AG04449 (cell line): ENCODE measurements at regions of chr2 and their contacts with region 1.

Region 1: DNA sequence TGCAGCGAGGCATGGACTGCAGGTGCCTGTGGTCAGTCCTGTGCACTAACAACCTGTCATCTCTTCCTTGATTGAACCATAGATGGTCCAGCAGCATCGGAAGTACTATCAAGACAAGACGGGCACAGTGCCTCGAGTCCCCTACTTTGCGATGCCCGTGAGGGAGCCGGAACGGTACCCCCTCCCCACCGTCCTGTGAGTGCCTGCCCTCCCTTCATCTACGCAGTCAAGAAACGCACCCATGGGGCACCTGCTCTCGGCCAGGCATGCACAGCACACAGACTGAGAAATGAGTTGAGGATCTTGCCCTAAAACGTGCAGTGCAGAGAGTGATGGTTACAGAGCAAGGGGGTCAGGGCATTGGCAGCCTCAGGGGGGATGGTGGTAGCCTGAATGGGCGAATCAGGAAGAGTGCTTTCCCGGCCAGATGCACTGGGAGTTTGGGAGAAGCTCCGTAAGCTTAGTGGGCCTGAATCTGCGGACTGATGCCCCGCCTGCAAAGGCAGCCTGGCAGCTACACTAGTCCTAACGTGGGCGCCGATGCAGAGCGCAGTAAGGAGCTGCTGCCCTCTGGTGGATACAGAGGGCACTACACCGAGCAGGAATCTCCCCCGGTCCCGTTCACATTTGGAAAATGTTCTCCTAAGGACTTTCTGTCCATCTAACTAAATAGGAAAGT is 63.6 kb downstream of the CIB4 start:
- DNase-seq: no peak
- H3K4me3 ChIP-seq: no peak overlapping the region
- CTCF ChIP-seq: peak; percentile 94

Region 2: DNA sequence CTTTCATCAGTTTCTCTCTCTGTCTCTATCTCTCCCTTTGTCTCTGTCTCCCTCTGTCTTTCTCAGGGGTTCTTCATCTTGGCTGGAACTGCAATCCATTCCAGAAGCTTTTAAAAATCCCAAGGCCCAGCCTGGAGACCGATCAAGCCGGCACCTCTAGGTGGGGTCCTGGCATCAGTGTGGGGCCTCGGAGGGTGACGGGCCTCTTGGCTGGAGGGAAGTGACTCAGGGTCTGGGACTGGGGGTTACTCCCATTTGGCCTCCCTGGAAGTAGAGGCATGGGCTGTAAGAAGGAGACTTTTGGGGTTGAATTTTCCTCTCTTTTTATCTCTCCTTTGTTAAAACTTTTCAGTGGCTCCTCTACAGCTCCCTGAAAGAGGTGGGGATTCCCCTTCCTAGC is 46.9 kb before region 1 on chr2:
- CTCF ChIA-PET with region 1: interaction called, 13 read pairs
- POLR2A ChIA-PET with region 1: no interaction called
- DNase-seq: peak; percentile 4
- H3K4me3 ChIP-seq: no peak overlapping the region
- CTCF ChIP-seq: no peak

Region 3: GRCh38 chr2:26555246-26556133 is 22.1 kb before region 1 on chr2:
- CTCF ChIA-PET with region 1: interaction called, 15 read pairs
- POLR2A ChIA-PET with region 1: no interaction called
- DNase-seq: no peak
- H3K4me3 ChIP-seq: no peak overlapping the region
- CTCF ChIP-seq: no peak

Region 4: DNA sequence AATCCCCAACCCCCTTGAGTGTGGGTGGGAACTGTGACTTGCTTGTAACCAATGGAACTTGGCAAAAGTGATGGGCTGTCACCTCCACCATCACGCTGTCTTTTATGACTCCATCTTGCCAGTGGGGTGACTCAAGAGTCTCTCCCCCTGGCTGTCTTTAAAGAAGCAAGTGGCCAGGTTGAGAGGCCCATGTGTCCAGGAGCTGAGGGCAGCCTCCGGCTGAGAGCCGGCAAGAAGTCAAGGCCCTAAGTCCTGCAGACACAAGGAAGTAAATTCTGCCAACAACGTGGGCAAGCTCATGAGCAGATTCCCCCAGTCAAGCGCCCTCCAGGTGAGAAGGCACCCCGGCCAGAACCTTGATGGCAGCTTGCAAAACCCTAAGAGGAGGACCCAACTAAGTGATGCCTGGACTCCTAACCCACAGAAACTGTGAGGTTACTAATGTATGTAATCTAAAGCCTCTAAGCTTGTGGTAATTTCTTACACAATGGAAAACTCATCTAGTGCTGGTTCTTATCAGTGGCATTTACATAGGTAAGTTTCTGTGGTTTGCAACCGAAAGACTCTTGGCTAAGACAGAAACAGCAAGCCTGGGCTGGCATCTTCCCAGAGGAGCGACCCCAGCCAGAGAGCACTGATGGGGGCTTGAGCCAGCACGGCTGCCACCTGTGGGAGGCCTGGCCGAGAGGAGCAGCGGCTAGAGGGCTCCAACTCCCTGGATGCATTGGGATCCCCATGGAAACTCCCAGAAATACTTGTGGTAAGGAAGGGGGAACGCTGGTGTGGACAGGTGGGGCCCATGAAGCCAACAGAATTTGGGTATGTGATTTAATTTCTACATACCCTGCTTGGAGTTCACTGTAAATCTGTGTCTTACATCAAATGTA is 14.3 kb after region 1 on chr2:
- CTCF ChIA-PET with region 1: interaction called, 96 read pairs
- POLR2A ChIA-PET with region 1: no interaction called
- DNase-seq: no peak
- H3K4me3 ChIP-seq: no peak overlapping the region
- CTCF ChIP-seq: no peak